ENCODE measurements at regions of chr5 and their contacts with region 1.

Region 1: DNA sequence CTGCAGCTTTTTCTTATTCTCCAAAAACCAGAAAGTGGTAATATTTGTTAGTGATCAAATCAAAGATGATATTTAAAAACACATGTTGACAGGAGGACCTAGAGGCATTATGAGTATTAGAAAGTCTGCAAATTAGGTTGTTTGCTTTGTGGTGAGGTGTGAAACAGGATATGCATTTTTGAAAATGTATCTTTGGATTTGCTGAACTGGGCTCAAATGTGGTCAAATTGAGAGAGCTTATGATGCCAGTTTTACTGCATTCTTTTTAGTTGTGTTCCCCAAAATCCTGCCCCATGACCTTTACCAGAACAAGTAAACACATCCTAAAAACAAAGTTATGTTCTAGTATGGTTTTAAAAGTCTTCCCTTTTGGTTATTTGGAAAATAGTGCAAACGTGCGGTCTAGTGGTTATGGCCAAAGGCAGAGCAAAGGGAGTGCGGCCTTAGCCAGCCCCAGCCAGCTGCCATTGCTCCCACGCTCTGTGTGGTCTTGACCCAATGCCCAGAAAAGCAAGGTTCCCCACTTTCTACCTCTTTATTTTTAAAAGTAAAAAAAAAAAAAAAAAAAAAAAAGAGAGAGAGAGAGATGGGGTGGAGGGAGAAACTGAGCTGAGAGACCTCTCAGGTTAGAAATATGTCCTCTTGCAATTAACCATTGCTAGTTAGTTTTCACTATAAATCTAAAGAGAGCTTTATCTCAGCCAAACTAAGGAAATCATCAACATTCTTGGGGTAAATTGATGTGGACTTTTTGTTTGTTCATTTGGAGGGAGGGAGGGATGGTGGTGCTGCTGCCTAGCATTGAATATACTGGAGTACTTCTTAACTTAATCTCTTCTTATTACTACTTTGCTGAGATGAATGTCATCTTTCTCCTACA is 176.6 kb downstream of the ARHGAP26 start:
- DNase-seq: no peak
- ATAC-seq: no peak
- H3K4me3 ChIP-seq: no peak overlapping the region
- H3K27ac ChIP-seq: no peak overlapping the region
- H3K4me1 ChIP-seq: peaks cover 4% of the 10 kb centered on the region
- H3K27me3 ChIP-seq: no peaks in the 10 kb centered on the region
- CTCF ChIP-seq: no peak

Region 2: GRCh38 chr5:143186623-143187022 is 239.8 kb after region 1 on chr5:
- CTCF ChIA-PET with region 1: interaction called, 14 read pairs
- POLR2A ChIA-PET with region 1: no interaction called
- intact Hi-C with region 1: no loop called
- DNase-seq: no peak
- ATAC-seq: no peak
- H3K4me3 ChIP-seq: no peak overlapping the region
- H3K27ac ChIP-seq: no peak overlapping the region
- H3K4me1 ChIP-seq: peaks cover 5% of the 10 kb centered on the region
- H3K27me3 ChIP-seq: no peaks in the 10 kb centered on the region
- CTCF ChIP-seq: no peak

Measured in PC-3 (cell line).